Heart right ventricle (tissue), 16 donors: ENCODE measurements at regions of chr4 and their contacts with region 1.

Region 1: GRCh38 chr4:10204401-10205058 is 87.9 kb upstream of the WDR1 start:
- DNase-seq: peak; percentile 10 to 52
- ATAC-seq: peak in 5 of 8 donors; percentile 27 to 68 (median 49)
- H3K4me3 ChIP-seq: no peak overlapping the region
- H3K27ac ChIP-seq: no peak overlapping the region
- H3K4me1 ChIP-seq: no peaks in the 10 kb centered on the region
- H3K27me3 ChIP-seq: no peaks in the 10 kb centered on the region
- CTCF ChIP-seq: no peak

Region 2: GRCh38 chr4:10106421-10107039 is 98.0 kb before region 1 on chr4:
- intact Hi-C with region 1: no loop called
- DNase-seq: peak in 1 of 2 donors; percentile 65
- ATAC-seq: peak; percentile 46 to 90 (median 73)
- H3K4me3 ChIP-seq: peak overlapping the region in 2 of 10 donors; percentile 5 to 16
- H3K27ac ChIP-seq: peak overlapping the region in 9 of 10 donors; percentile 50 to 83 (median 77)
- H3K4me1 ChIP-seq: peaks cover 39 to 98% (median 93%) of the 10 kb centered on the region in 9 donors
- H3K27me3 ChIP-seq: no peaks in the 10 kb centered on the region
- CTCF ChIP-seq: no peak

Region 3: GRCh38 chr4:10232114-10232513 is 27.6 kb after region 1 on chr4:
- intact Hi-C with region 1: loop called in 6 of 10 experiments (anchors 1 to 2 kb)
- DNase-seq: no peak
- ATAC-seq: no peak
- H3K4me3 ChIP-seq: no peak overlapping the region
- H3K27ac ChIP-seq: no peak overlapping the region
- H3K4me1 ChIP-seq: no peaks in the 10 kb centered on the region
- H3K27me3 ChIP-seq: no peaks in the 10 kb centered on the region
- CTCF ChIP-seq: no peak

Region 4: GRCh38 chr4:10239982-10240654 is 35.6 kb after region 1 on chr4:
- intact Hi-C with region 1: loop called in 1 of 10 experiments (anchors 2 kb)
- DNase-seq: no peak
- ATAC-seq: peak in 3 of 8 donors; percentile 55 to 70 (median 67)
- H3K4me3 ChIP-seq: no peak overlapping the region
- H3K27ac ChIP-seq: no peak overlapping the region
- H3K4me1 ChIP-seq: peaks cover 0 to 7% (median 0%) of the 10 kb centered on the region in 9 donors
- H3K27me3 ChIP-seq: peaks cover 0 to 9% (median 0%) of the 10 kb centered on the region in 7 donors
- CTCF ChIP-seq: no peak

Region 5: GRCh38 chr4:10253755-10254154 is 49.2 kb after region 1 on chr4:
- intact Hi-C with region 1: no loop called
- DNase-seq: no peak
- ATAC-seq: no peak
- H3K4me3 ChIP-seq: no peak overlapping the region
- H3K27ac ChIP-seq: no peak overlapping the region
- H3K4me1 ChIP-seq: no peaks in the 10 kb centered on the region
- H3K27me3 ChIP-seq: peaks cover 0 to 11% (median 0%) of the 10 kb centered on the region in 7 donors
- CTCF ChIP-seq: no peak

Region 6: GRCh38 chr4:10722957-10723356 is 518.4 kb after region 1 on chr4:
- intact Hi-C with region 1: no loop called
- DNase-seq: no peak
- ATAC-seq: no peak
- H3K4me3 ChIP-seq: no peak overlapping the region
- H3K27ac ChIP-seq: no peak overlapping the region
- H3K4me1 ChIP-seq: no peaks in the 10 kb centered on the region
- H3K27me3 ChIP-seq: no peaks in the 10 kb centered on the region
- CTCF ChIP-seq: no peak